ENCODE measurements at regions of chr11 and their contacts with region 1.

Region 1: GRCh38 chr11:19742588-19743292 is 30.1 kb downstream of the NAV2 start:
- DNase-seq: peak; percentile 60
- H3K4me3 ChIP-seq: no peak overlapping the region
- H3K27ac ChIP-seq: no peak overlapping the region
- H3K4me1 ChIP-seq: no peaks in the 10 kb centered on the region
- CTCF ChIP-seq: peak; percentile 86

Region 2: DNA sequence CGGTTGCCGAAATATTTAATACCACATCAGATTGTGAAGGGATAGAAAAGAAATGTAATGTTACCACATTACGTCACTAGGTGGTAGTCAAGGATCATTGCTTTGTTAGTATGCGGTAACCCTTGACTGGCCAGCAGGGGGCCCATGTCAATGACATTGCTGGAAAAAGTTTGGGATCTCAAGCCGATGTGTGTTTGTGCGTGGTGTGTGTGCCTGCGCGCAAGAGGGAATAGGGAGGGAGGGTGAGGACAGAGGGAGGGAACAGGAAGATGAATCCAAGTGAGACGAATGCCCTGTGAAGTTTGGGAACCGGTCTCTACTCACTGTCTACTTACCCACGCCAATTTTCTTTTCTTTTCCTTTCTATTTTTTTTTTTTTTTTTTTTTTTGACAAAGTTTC is 671.5 kb before region 1 on chr11:
- CTCF ChIA-PET with region 1: no interaction called
- POLR2A ChIA-PET with region 1: no interaction called
- intact Hi-C with region 1: loop called (anchors 5 kb)
- DNase-seq: peak; percentile 80
- H3K4me3 ChIP-seq: no peak overlapping the region
- H3K27ac ChIP-seq: no peak overlapping the region
- H3K4me1 ChIP-seq: no peaks in the 10 kb centered on the region
- CTCF ChIP-seq: peak; percentile 100

Region 3: GRCh38 chr11:19561011-19561410 is 181.7 kb before region 1 on chr11:
- CTCF ChIA-PET with region 1: no interaction called
- POLR2A ChIA-PET with region 1: no interaction called
- intact Hi-C with region 1: loop called (anchors 1 kb)
- DNase-seq: no peak
- H3K4me3 ChIP-seq: no peak overlapping the region
- H3K27ac ChIP-seq: no peak overlapping the region
- H3K4me1 ChIP-seq: no peaks in the 10 kb centered on the region
- CTCF ChIP-seq: no peak

Measured in OCI-LY7 (cell line).